Dendritic cell treated with granulocyte-macrophage colony-stimulating factor and Interleukin-4, amounts not matched to agents 40 ng/mL and 50 ng/mL, for 4 days (primary cell): ENCODE measurements at regions of chr15 and their contacts with region 1.

Region 1: DNA sequence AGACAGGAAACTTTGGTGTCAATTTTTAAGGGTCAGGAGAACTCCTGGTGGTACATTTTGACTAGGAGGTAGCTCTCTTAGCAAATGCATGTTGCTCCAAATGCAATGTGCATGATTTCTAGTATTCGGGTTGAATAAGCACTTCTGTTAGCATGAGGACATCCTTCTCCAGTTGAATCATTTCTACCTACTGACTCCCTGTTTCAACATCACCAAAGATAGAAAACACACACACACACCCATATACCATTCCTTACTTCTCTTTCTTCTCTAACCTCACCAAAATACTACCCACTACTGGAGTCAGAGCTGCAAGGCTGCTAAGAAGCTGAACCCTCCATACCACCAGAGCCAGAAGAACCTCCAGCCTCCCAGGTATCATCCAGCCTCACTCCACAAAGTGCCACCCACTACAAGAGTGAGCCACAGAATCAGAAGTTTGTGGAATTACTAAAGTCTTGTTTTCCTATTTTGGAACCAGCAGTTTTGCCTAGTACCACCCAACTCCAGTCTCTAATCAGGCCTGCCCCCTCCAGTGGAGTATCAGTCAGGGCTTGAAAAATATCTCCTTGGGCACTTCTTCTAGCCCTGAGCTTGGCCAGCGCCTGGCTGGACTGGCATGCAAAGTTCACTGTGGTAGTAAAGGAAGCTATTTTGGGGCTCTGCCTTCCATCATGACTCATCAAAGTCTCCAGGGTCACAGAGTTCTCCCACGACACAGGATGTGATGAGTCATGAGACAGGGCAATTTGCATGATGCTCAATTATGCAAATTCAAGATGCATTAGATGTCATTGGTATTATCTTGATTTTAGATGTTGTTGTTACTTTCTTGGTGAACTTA is 110.2 kb downstream of the CYP19A1 start:
- H3K4me3 Mint-ChIP-seq: no peak overlapping the region
- H3K27ac Mint-ChIP-seq: no peak overlapping the region
- H3K4me1 Mint-ChIP-seq: peaks cover 39% of the 10 kb centered on the region
- H3K27me3 Mint-ChIP-seq: no peaks in the 10 kb centered on the region

Region 2: GRCh38 chr15:51270706-51271105 is 42.5 kb after region 1 on chr15:
- intact Hi-C with region 1: loop called (anchors 5 kb)
- H3K4me3 Mint-ChIP-seq: no peak overlapping the region
- H3K27ac Mint-ChIP-seq: no peak overlapping the region
- H3K4me1 Mint-ChIP-seq: peaks cover 13% of the 10 kb centered on the region
- H3K27me3 Mint-ChIP-seq: peaks cover 31% of the 10 kb centered on the region